ENCODE measurements at regions of chr5 and their contacts with region 1.

Region 1: GRCh38 chr5:110401881-110402280 is 324.6 kb downstream of the TMEM232 start:
- DNase-seq: no peak
- H3K4me3 ChIP-seq: no peak overlapping the region
- H3K27ac ChIP-seq: no peak overlapping the region
- H3K4me1 ChIP-seq: no peaks in the 10 kb centered on the region
- H3K27me3 ChIP-seq: no peaks in the 10 kb centered on the region
- CTCF ChIP-seq: no peak
- POLR2A ChIP-seq: no peak

Region 2: GRCh38 chr5:110115487-110115886 is 286.4 kb before region 1 on chr5:
- intact Hi-C with region 1: loop called (anchors 10 kb)
- DNase-seq: no peak
- H3K4me3 ChIP-seq: no peak overlapping the region
- H3K27ac ChIP-seq: no peak overlapping the region
- H3K4me1 ChIP-seq: no peaks in the 10 kb centered on the region
- H3K27me3 ChIP-seq: no peaks in the 10 kb centered on the region
- CTCF ChIP-seq: no peak
- POLR2A ChIP-seq: no peak

Region 3: GRCh38 chr5:110203661-110204060 is 198.2 kb before region 1 on chr5:
- intact Hi-C with region 1: no loop called
- DNase-seq: no peak
- H3K4me3 ChIP-seq: no peak overlapping the region
- H3K27ac ChIP-seq: no peak overlapping the region
- H3K4me1 ChIP-seq: no peaks in the 10 kb centered on the region
- H3K27me3 ChIP-seq: no peaks in the 10 kb centered on the region
- CTCF ChIP-seq: no peak
- POLR2A ChIP-seq: no peak